ENCODE measurements at regions of chr14 and their contacts with region 1.

Region 1: DNA sequence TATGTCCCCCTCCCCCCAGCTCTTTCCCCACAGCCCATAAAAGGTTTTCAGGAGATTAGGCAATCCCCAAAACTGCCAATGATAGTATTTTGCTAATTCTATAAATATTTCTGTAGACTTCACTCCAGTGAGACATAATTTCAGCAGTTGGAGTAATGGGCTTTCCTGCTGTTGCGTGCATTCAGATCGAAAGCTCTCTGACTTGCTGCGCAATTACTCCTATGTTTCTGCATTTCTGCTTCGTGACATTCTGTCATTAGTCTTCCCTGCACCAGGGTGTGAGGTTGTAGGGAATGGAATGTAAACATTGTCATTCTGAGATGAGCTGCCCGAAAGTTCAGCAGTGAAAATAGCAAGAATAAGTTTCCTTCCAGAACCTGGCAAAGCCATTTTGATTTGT is 58.2 kb downstream of the SAMD4A start:
- DNase-seq: peak in 1 of 2 experiments; percentile 58
- H3K4me3 ChIP-seq: peak overlapping the region; percentile 18; the same call in 1 of the 2 replicates
- H3K4me3 Mint-ChIP-seq: peak overlapping the region; percentile 21
- H3K27ac Mint-ChIP-seq: peak overlapping the region; percentile 65
- H3K4me1 ChIP-seq: peaks cover 30% of the 10 kb centered on the region
- H3K4me1 Mint-ChIP-seq: peaks cover 18% of the 10 kb centered on the region
- H3K27me3 ChIP-seq: no peaks in the 10 kb centered on the region
- H3K27me3 Mint-ChIP-seq: no peaks in the 10 kb centered on the region
- CTCF ChIP-seq: no peak

Region 2: GRCh38 chr14:54642801-54643697 is 17.9 kb after region 1 on chr14:
- CTCF ChIA-PET with region 1: interaction called, 5 read pairs
- POLR2A ChIA-PET with region 1: interaction called, 9 read pairs
- intact Hi-C with region 1: loop called (anchors 2 kb)
- DNase-seq: peak; percentile 79
- H3K4me3 ChIP-seq: no peak overlapping the region
- H3K4me3 Mint-ChIP-seq: peak overlapping the region; percentile 75
- H3K27ac Mint-ChIP-seq: peak overlapping the region; percentile 87
- H3K4me1 ChIP-seq: peaks cover 79% of the 10 kb centered on the region
- H3K4me1 Mint-ChIP-seq: peaks cover 31% of the 10 kb centered on the region
- H3K27me3 ChIP-seq: no peaks in the 10 kb centered on the region
- H3K27me3 Mint-ChIP-seq: no peaks in the 10 kb centered on the region
- CTCF ChIP-seq: peak in 1 of 2 experiments; percentile 23